ENCODE measurements at regions of chr17 and their contacts with region 1.

Region 1: GRCh38 chr17:31433091-31433790 is 41.8 kb downstream of the RAB11FIP4 start:
- DNase-seq: peak; percentile 50
- H3K4me3 Mint-ChIP-seq: no peak overlapping the region
- H3K27ac Mint-ChIP-seq: no peak overlapping the region
- H3K4me1 Mint-ChIP-seq: peaks cover 16% of the 10 kb centered on the region
- H3K27me3 Mint-ChIP-seq: peaks cover 9% of the 10 kb centered on the region

Region 2: GRCh38 chr17:31405890-31406371 is 27.3 kb before region 1 on chr17:
- CTCF ChIA-PET with region 1: no interaction called
- POLR2A ChIA-PET with region 1: no interaction called
- intact Hi-C with region 1: no loop called
- DNase-seq: no peak
- H3K4me3 Mint-ChIP-seq: no peak overlapping the region
- H3K27ac Mint-ChIP-seq: no peak overlapping the region
- H3K4me1 Mint-ChIP-seq: no peaks in the 10 kb centered on the region
- H3K27me3 Mint-ChIP-seq: no peaks in the 10 kb centered on the region

Region 3: DNA sequence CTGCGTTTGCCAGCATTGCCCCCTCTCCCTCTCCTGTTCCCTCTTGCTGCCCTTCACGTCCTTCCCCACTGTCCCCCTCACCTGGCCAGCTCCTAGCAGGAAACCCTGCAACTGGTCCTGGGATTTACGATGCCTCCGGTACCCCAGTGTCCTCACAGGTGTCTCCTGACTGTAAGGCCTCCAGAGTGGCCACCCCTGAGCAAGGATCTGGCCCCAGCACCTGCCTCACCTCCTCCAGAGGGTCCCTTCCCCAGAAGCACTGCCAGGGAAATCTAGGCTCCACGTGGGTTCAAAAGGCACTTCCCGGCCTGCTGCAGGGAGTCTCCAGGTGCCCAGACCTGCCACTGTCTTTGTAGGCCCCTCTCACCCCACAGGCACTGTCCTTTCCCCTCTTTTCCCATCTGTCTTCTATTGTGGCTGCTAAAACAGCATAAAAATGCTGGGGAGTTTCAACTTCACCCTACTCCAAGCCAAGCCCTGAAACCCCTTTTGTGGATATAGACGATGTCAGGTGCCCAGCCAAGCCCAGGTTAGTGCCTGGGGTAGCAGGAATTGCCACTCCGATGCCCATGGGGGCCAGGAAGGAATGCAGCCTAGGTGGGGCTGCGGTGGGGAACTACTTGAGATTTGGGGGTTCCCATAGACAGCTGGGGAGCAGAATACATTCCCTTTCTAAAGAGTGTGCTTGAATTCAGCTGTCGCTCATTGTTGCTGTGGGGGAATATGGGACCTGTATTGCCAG is 16.0 kb before region 1 on chr17:
- CTCF ChIA-PET with region 1: no interaction called
- POLR2A ChIA-PET with region 1: no interaction called
- intact Hi-C with region 1: no loop called
- DNase-seq: no peak
- H3K4me3 Mint-ChIP-seq: no peak overlapping the region
- H3K27ac Mint-ChIP-seq: no peak overlapping the region
- H3K4me1 Mint-ChIP-seq: no peaks in the 10 kb centered on the region
- H3K27me3 Mint-ChIP-seq: no peaks in the 10 kb centered on the region

Region 4: GRCh38 chr17:31517524-31517923 is 84.3 kb after region 1 on chr17:
- CTCF ChIA-PET with region 1: interaction called, 144 read pairs
- POLR2A ChIA-PET with region 1: no interaction called
- intact Hi-C with region 1: no loop called
- DNase-seq: no peak
- H3K4me3 Mint-ChIP-seq: no peak overlapping the region
- H3K27ac Mint-ChIP-seq: no peak overlapping the region
- H3K4me1 Mint-ChIP-seq: peaks cover 11% of the 10 kb centered on the region
- H3K27me3 Mint-ChIP-seq: no peaks in the 10 kb centered on the region

Region 5: DNA sequence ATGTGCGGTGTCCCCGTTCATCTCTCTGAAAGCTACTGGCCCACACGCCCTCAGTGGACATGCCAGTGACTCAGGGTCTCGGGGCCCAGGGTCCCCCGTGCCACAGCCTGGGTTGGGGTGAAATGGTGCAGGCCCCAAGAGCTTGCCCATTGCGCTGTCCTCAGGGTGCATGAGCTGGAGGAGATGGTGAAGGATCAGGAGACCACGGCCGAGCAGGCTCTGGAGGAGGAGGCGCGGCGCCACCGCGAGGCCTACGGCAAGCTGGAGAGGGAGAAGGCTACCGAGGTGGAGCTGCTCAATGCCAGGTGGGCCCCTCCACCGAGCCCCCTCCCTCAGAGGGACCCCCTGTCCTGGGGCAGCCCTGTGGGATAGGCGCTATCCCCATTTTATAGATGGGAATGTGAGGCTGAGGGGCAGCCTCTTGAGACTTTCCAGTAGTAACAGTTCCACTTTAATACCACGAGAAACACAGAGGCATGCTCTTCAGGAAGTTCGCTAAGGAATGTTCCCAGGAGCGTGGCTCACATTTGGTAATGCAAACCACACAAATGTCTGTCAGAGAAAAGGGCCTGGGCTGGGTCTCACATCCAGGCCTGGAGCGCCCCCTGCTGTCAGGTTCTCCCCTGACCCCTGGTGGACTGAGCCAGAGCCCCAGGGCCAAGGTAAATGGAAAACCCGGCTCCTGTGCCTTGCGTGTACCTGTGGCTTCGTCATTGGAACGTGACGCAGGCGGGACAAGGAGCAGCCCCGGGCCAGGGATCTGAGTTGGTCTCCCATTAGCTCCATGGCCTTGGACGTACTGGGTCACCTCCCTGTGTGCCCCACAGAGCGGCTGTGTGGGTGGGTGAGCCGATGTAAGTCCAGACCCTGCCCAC is 91.9 kb after region 1 on chr17:
- CTCF ChIA-PET with region 1: interaction called, 144 read pairs
- POLR2A ChIA-PET with region 1: no interaction called
- intact Hi-C with region 1: loop called (anchors 1 kb)
- DNase-seq: peak; percentile 88
- H3K4me3 Mint-ChIP-seq: no peak overlapping the region
- H3K27ac Mint-ChIP-seq: no peak overlapping the region
- H3K4me1 Mint-ChIP-seq: no peaks in the 10 kb centered on the region
- H3K27me3 Mint-ChIP-seq: no peaks in the 10 kb centered on the region